ENCODE measurements at regions of chr2 and their contacts with region 1.

Region 1: GRCh38 chr2:156400706-156401678 is 35.2 kb upstream of the GPD2 start:
- DNase-seq: peak; percentile 75 to 81
- H3K4me3 ChIP-seq: peak overlapping the region; percentile 50 to 58
- H3K27ac ChIP-seq: peak overlapping the region; percentile 91 to 99
- H3K4me1 ChIP-seq: no peaks in the 10 kb centered on the region
- H3K27me3 ChIP-seq: no peaks in the 10 kb centered on the region
- CTCF ChIP-seq: no peak
- POLR2A ChIP-seq: no peak

Region 2: DNA sequence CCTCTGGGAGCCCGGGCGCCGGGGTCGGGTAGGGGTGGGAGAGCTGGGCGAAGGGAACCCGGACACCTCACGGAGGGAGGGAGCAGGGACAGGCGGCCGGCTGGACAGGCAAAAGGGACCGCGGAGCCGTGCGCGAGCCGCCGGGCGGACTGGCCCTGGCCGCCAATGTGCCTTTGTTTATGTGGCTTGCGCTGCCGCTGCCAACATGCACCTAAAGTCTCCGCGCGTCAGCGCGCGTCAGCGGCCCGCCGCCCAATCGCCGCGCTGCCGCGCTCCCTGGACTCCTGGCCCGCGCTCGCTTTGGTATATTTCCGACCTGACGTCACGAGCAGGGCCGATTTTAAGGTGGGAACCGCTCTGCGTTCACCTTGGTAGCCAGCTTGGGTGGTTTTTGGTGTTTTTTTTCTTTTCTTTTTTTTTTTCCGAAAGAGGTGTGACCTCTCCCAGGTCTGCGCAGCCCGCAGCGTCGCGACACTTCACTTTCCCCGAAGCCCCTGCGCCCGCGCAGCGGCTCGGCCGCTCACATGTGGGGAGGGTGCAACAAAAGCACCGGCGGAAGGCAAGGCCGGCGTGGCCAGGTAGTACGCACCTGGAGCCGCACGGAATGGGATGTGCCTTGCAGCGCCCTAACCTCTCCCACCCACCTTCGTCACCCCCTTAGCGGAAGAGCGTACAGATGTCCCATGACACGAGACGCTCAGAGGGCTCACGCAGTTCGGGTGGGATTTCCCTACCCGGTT is 68.3 kb before region 1 on chr2 and contains the start of gene NR4A2:
- intact Hi-C with region 1: loop called (anchors 5 kb)
- DNase-seq: peak; percentile 88 to 90
- H3K4me3 ChIP-seq: peak within 1 kb of the TSS; percentile 79 to 87
- H3K27ac ChIP-seq: peak within 1 kb of the TSS; percentile 98 to 99
- H3K4me1 ChIP-seq: no peaks in the 10 kb centered on the region
- H3K27me3 ChIP-seq: no peaks in the 10 kb centered on the region
- CTCF ChIP-seq: peak in 1 of 4 experiments; percentile 3
- POLR2A ChIP-seq: peak; percentile 92 to 93
- total RNA-seq, gene NR4A2: 0.83 to 15.9 (median 3.4) TPM

Region 3: GRCh38 chr2:156435715-156436496 is 34.9 kb after region 1 on chr2 and contains the start of gene GPD2:
- intact Hi-C with region 1: loop called (anchors 5 kb)
- DNase-seq: peak; percentile 88 to 91
- H3K4me3 ChIP-seq: peak within 1 kb of the TSS; percentile 90
- H3K27ac ChIP-seq: peak within 1 kb of the TSS; percentile 96 to 100
- H3K4me1 ChIP-seq: peaks cover 0 to 3% of the 10 kb centered on the region in 2 donors
- H3K27me3 ChIP-seq: no peaks in the 10 kb centered on the region
- CTCF ChIP-seq: peak in 2 of 4 experiments; percentile 14 to 27
- POLR2A ChIP-seq: peak; percentile 58 to 66
- total RNA-seq, gene GPD2: 2.0 to 41.6 (median 32.1) TPM

Region 4: GRCh38 chr2:157032017-157032416 is 631.0 kb after region 1 on chr2:
- intact Hi-C with region 1: no loop called
- DNase-seq: no peak
- H3K4me3 ChIP-seq: no peak overlapping the region
- H3K27ac ChIP-seq: no peak overlapping the region
- H3K4me1 ChIP-seq: no peaks in the 10 kb centered on the region
- H3K27me3 ChIP-seq: no peaks in the 10 kb centered on the region
- CTCF ChIP-seq: no peak
- POLR2A ChIP-seq: no peak